ENCODE measurements at regions of chr2 and their contacts with region 1.

Region 1: DNA sequence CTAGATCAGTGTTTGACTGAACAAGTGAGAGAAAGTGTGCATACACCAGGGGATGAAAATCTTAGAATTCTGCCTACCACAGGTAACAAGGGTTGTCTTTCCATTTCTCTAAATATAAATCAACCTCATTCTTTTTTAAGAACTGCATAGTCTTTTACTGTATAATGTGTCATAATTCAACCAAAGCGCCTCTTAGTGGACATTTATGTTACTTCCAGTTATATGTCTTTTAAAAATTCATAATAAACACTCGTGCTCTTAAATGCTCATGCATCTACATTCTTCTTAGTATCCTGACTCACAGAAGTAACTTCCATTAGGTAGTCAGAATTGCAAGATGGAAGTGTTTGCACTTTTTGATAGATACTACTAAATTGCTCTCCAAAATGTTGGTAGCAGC is 76.2 kb downstream of the CHRNA1 start:
- DNase-seq: peak in 2 of 9 experiments; percentile 58 to 70
- ATAC-seq: peak; percentile 67
- H3K4me3 ChIP-seq: no peak overlapping the region
- H3K4me3 Mint-ChIP-seq: no peak overlapping the region
- H3K27ac ChIP-seq: no peak overlapping the region
- H3K27ac Mint-ChIP-seq: peak overlapping the region; percentile 68
- H3K4me1 ChIP-seq: peaks cover 11% of the 10 kb centered on the region
- H3K4me1 Mint-ChIP-seq: peaks cover 24% of the 10 kb centered on the region
- H3K27me3 ChIP-seq: no peaks in the 10 kb centered on the region
- H3K27me3 Mint-ChIP-seq: no peaks in the 10 kb centered on the region
- CTCF ChIP-seq: peak; percentile 73

Region 2: GRCh38 chr2:174585146-174585954 is 102.7 kb before region 1 on chr2:
- CTCF ChIA-PET with region 1: interaction called, 189 read pairs
- POLR2A ChIA-PET with region 1: no interaction called
- intact Hi-C with region 1: loop called in 1 of 2 experiments (anchors 5 kb)
- DNase-seq: peak in 1 of 9 experiments; percentile 46
- ATAC-seq: no peak
- H3K4me3 ChIP-seq: no peak overlapping the region
- H3K4me3 Mint-ChIP-seq: peak overlapping the region; percentile 51
- H3K27ac ChIP-seq: peak overlapping the region in 1 of 2 experiments; percentile 91
- H3K27ac Mint-ChIP-seq: peak overlapping the region; percentile 95
- H3K4me1 ChIP-seq: peaks cover 92% of the 10 kb centered on the region
- H3K4me1 Mint-ChIP-seq: peaks cover 94% of the 10 kb centered on the region
- H3K27me3 ChIP-seq: no peaks in the 10 kb centered on the region
- H3K27me3 Mint-ChIP-seq: no peaks in the 10 kb centered on the region
- CTCF ChIP-seq: no peak

Region 3: GRCh38 chr2:174603280-174603679 is 84.8 kb before region 1 on chr2:
- CTCF ChIA-PET with region 1: interaction called, 86 read pairs
- POLR2A ChIA-PET with region 1: interaction called, 10 read pairs
- intact Hi-C with region 1: loop called (anchors 1 to 2 kb)
- DNase-seq: peak in 6 of 9 experiments; percentile 31 to 86 (median 64)
- ATAC-seq: peak; percentile 67
- H3K4me3 ChIP-seq: no peak overlapping the region
- H3K4me3 Mint-ChIP-seq: no peak overlapping the region
- H3K27ac ChIP-seq: peak overlapping the region in 1 of 2 experiments; percentile 11
- H3K27ac Mint-ChIP-seq: peak overlapping the region; percentile 85
- H3K4me1 ChIP-seq: peaks cover 76% of the 10 kb centered on the region
- H3K4me1 Mint-ChIP-seq: peaks cover 86% of the 10 kb centered on the region
- H3K27me3 ChIP-seq: no peaks in the 10 kb centered on the region
- H3K27me3 Mint-ChIP-seq: no peaks in the 10 kb centered on the region
- CTCF ChIP-seq: peak; percentile 65

Region 4: DNA sequence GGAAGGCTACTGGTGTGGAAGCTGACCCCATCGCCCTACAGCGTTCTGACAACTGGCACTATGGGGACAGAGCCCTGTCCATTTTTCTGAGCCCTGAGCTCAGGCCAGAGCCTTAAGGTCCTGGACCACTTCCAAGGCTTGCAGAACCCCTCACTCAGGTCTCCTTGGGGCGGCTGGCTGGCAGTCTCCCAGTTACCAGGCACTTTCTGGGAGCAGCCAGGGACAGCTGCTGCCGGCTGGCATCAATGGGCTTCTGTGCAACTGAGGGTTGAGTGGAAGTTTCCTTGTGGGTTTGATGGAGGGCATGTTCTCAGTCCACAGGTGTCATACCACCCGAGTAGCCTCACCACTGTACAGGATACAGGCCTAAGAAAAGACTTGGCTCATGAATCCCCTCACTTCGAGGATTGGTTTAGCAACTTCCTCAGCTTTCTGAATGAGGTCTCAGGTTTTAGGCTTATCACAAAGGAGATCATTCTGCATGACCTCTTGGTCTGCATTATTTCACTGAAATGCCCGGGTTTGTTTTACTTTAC is 63.1 kb before region 1 on chr2:
- CTCF ChIA-PET with region 1: interaction called, 11 read pairs
- POLR2A ChIA-PET with region 1: no interaction called
- intact Hi-C with region 1: no loop called
- DNase-seq: no peak
- ATAC-seq: no peak
- H3K4me3 ChIP-seq: no peak overlapping the region
- H3K4me3 Mint-ChIP-seq: no peak overlapping the region
- H3K27ac ChIP-seq: no peak overlapping the region
- H3K27ac Mint-ChIP-seq: peak overlapping the region; percentile 79
- H3K4me1 ChIP-seq: peaks cover 54% of the 10 kb centered on the region
- H3K4me1 Mint-ChIP-seq: peaks cover 72% of the 10 kb centered on the region
- H3K27me3 ChIP-seq: no peaks in the 10 kb centered on the region
- H3K27me3 Mint-ChIP-seq: no peaks in the 10 kb centered on the region
- CTCF ChIP-seq: no peak

Region 5: DNA sequence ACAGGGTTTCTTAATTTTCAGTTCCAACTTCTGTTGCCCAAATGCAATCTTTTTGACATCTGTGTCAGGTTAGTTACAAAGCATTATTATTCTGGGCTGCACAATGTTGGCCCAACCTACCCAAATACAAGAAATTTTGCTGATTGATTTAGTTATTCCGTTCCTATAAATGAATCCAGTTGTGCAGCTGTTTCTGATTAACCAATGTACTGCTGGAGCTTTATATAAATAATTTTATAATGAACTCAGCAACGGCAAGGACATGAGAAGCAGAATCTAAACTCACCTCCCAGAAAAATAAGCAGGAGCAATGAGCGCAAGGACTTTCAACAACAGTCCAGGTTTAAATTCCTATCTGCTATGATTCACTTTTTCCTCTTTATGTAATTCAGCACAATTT is 14.2 kb before region 1 on chr2:
- CTCF ChIA-PET with region 1: interaction called, 16 read pairs
- POLR2A ChIA-PET with region 1: interaction called, 3 read pairs
- intact Hi-C with region 1: no loop called
- DNase-seq: no peak
- ATAC-seq: no peak
- H3K4me3 ChIP-seq: no peak overlapping the region
- H3K4me3 Mint-ChIP-seq: no peak overlapping the region
- H3K27ac ChIP-seq: no peak overlapping the region
- H3K27ac Mint-ChIP-seq: no peak overlapping the region
- H3K4me1 ChIP-seq: peaks cover 28% of the 10 kb centered on the region
- H3K4me1 Mint-ChIP-seq: peaks cover 31% of the 10 kb centered on the region
- H3K27me3 ChIP-seq: no peaks in the 10 kb centered on the region
- H3K27me3 Mint-ChIP-seq: no peaks in the 10 kb centered on the region
- CTCF ChIP-seq: no peak